HEK293 (cell line): ENCODE measurements at regions of chr5 and their contacts with region 1.

Region 1: DNA sequence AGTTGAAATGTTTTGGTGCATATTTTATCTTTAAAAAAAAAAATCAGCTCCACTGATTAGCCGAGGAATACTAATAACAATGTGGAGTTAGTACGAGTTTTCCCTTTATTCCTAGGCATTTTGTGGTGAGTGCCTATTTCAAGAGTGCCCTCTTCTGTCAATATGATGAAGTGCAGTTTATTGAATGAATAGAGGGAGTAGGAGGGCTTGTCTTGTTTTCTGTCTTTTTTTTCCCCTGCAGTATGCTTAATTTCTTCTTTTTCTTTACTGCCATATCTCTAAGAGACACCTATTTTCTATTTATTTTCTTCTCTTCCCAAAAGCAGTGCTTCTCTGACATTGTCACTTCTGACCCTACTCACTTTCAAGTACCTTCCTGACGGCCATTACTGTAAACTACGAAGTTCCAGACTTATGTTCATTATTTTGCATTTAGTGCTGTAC is 169.6 kb upstream of the PITX1 start:
- H3K4me3 ChIP-seq: no peak overlapping the region
- H3K27ac ChIP-seq: no peak overlapping the region
- H3K4me1 ChIP-seq: no peaks in the 10 kb centered on the region
- CTCF ChIP-seq: no peak

Region 2: GRCh38 chr5:135072387-135073281 is 131.0 kb before region 1 on chr5:
- CTCF ChIA-PET with region 1: no interaction called
- POLR2A ChIA-PET with region 1: no interaction called
- H3K4me3 ChIP-seq: no peak overlapping the region
- H3K27ac ChIP-seq: no peak overlapping the region
- H3K4me1 ChIP-seq: no peaks in the 10 kb centered on the region
- CTCF ChIP-seq: no peak

Region 3: DNA sequence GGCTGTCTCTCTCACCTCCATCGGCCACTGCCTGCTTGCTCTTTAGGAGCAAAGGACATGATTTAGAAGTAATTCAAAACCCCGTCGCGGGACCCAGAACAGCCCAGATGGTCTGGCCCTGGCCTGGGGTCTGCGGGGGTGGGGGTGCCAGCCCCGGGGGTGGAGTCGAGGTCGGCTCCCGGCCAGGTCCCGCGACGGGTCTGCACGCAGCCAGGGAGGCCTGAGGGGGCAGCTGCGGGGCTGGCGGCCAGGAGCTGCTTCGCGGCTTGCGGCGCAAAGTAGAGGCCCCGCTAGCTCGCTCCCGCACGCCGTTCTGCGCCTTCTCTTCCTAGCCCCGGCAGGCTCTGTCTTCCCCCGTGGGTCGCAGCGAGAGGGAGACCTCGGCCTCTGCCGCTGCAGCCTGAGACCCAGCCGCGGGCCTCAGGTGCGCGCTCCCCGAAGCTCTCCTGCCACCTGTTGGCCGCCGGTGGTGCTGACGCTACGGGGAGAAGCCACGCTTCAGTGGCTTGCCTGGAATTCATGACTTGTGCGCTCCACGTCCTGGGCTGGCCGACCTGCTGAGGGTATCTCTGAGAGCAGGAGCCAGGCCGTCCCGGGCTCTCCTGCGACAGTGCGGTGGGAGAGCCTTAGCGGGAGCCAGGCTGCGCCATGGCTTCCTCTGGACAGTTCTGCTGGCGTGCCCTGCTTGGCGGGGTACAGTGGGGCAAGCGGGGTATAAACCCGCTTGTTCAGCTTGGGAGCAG is 12.4 kb before region 1 on chr5:
- CTCF ChIA-PET with region 1: interaction called, 12 read pairs
- POLR2A ChIA-PET with region 1: no interaction called
- H3K4me3 ChIP-seq: peak overlapping the region; percentile 47
- H3K27ac ChIP-seq: no peak overlapping the region; the same call in 1 of the 2 replicates
- H3K4me1 ChIP-seq: no peaks in the 10 kb centered on the region; the same call in 1 of the 2 replicates
- CTCF ChIP-seq: peak; percentile 99